GM12878 (cell line): ENCODE measurements at regions of chr3 and their contacts with region 1.

Region 1: GRCh38 chr3:66394019-66394752 is 106.6 kb downstream of the LRIG1 start:
- DNase-seq: peak; percentile 47
- ATAC-seq: peak; percentile 85
- H3K4me3 ChIP-seq: peak overlapping the region; percentile 29; the same call in 1 of the 2 replicates
- H3K27ac ChIP-seq: peak overlapping the region; percentile 28; the same call in 1 of the 2 replicates
- H3K4me1 ChIP-seq: peaks cover 22% of the 10 kb centered on the region
- H3K27me3 ChIP-seq: no peaks in the 10 kb centered on the region
- CTCF ChIP-seq: no peak
- EP300 ChIP-seq: no peak; a peak in 1 of 4 replicates
- POLR2A ChIP-seq: peak; percentile 70
- RAD21 ChIP-seq: no peak

Region 2: DNA sequence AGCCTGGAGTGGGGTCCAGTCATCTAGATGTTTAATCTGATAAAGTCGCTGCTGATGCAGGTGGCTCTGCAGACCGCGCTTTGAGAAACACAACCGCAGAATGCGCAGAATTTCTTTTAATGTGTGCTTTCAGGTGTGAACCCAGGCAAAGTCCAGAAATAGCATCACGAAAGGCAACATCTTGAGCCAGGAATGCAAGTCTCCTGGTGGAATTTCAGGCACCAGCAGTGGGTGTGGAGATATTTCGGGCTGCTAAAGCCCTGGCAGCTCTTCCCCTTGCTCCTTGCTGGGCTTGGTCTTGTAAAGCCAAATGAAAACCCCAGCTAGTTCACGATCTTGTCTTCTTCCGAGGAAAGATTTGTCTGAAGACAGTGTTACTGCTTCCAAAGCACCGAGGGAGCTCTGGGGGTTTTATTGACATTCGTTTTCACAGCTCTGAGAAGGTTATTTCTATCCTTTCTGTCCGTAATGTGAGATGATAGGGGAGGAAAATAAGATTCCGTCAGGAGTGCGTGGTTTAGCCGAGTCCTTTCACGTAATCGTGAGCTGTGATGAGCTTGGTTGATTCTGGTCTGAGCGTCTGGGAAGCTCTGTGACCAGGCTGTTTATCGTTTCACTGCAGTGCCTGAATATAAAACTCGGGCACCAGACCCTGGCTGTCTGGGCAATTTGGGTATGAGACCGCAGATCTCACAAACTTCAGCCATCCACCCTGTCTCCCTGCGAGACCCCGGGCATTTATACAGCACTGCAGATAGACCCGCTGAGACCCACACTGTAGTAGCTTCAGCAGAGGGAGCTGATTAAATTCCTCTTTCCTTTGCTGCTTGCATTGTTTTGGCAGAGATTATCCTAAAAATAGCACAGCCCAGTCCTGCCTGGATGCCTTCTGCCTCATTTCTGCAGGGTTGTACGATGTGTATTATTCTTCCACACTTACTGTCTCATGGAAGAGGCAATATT is 240.4 kb before region 1 on chr3:
- CTCF ChIA-PET with region 1: no interaction called
- POLR2A ChIA-PET with region 1: no interaction called
- RAD21 ChIA-PET with region 1: no interaction called
- SMC1A ChIA-PET with region 1: no interaction called
- in situ Hi-C with region 1: no loop called
- intact Hi-C with region 1: no loop called
- DNase-seq: no peak
- ATAC-seq: no peak
- H3K4me3 ChIP-seq: no peak overlapping the region
- H3K27ac ChIP-seq: no peak overlapping the region
- H3K4me1 ChIP-seq: no peaks in the 10 kb centered on the region
- H3K27me3 ChIP-seq: 0 out of 4 replicates have a peak, but pooled peaks cover 0 to 2% of the 10 kb centered on the region in 2 experiments
- CTCF ChIP-seq: no peak
- EP300 ChIP-seq: no peak
- POLR2A ChIP-seq: no peak
- RAD21 ChIP-seq: no peak

Region 3: GRCh38 chr3:66378256-66378823 is 15.8 kb before region 1 on chr3:
- CTCF ChIA-PET with region 1: interaction called, 13 read pairs
- POLR2A ChIA-PET with region 1: interaction called, 3 read pairs
- RAD21 ChIA-PET with region 1: no interaction called
- SMC1A ChIA-PET with region 1: interaction called, 4 read pairs
- in situ Hi-C with region 1: no loop called
- intact Hi-C with region 1: no loop called
- DNase-seq: no peak
- ATAC-seq: peak; percentile 61
- H3K4me3 ChIP-seq: no peak overlapping the region
- H3K27ac ChIP-seq: no peak overlapping the region
- H3K4me1 ChIP-seq: no peaks in the 10 kb centered on the region
- H3K27me3 ChIP-seq: no peaks in the 10 kb centered on the region
- CTCF ChIP-seq: peak; percentile 40 to 67 (median 63)
- EP300 ChIP-seq: no peak
- POLR2A ChIP-seq: no peak
- RAD21 ChIP-seq: peak; percentile 40

Region 4: DNA sequence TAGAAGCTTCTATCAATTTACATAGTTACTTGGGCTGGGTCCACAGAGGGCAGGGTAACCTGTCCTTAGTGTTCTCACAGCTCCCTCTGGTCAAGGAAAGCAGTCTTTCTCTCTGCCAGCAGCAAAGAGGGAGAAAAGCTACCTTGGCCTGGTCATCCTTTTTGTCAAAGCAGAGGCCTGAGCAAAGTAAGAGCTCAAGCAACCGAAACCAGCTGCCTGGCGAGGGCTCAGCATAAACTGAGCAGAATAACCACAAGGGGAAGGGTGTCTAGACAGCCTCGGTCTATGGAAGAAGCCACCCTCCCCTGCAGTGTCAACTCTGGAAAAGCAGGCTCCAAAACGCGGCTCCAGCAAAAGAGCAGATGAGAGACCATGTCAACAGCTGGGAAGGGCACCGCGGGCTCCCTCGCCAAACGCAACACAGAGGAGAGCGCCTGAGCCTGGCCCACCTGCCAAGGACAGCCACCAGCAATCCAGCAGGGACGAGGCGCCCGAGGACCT is 89.3 kb after region 1 on chr3:
- CTCF ChIA-PET with region 1: interaction called, 3 read pairs
- POLR2A ChIA-PET with region 1: no interaction called
- RAD21 ChIA-PET with region 1: no interaction called
- SMC1A ChIA-PET with region 1: no interaction called
- in situ Hi-C with region 1: no loop called
- intact Hi-C with region 1: loop called (anchors 5 kb)
- DNase-seq: no peak
- ATAC-seq: peak; percentile 35
- H3K4me3 ChIP-seq: no peak overlapping the region
- H3K27ac ChIP-seq: no peak overlapping the region
- H3K4me1 ChIP-seq: peaks cover 42% of the 10 kb centered on the region
- H3K27me3 ChIP-seq: no peaks in the 10 kb centered on the region
- CTCF ChIP-seq: no peak
- EP300 ChIP-seq: no peak
- POLR2A ChIP-seq: no peak
- RAD21 ChIP-seq: no peak